Activated CD4-positive, alpha-beta memory T cell treated with anti-CD3 and anti-CD28 coated beads for 36 hours (primary cell): ENCODE measurements at regions of chr2 and their contacts with region 1.

Region 1: GRCh38 chr2:70142590-70143313 is 48.1 kb downstream of the C2orf42 start:
- DNase-seq: peak; percentile 100
- H3K4me3 Mint-ChIP-seq: peak overlapping the region; percentile 89
- H3K27ac Mint-ChIP-seq: peak overlapping the region; percentile 96
- H3K4me1 Mint-ChIP-seq: peaks cover 62% of the 10 kb centered on the region
- H3K27me3 Mint-ChIP-seq: no peaks in the 10 kb centered on the region

Region 2: GRCh38 chr2:69829256-69830046 is 313.3 kb before region 1 on chr2 and contains the start of gene GMCL1:
- CTCF ChIA-PET with region 1: no interaction called
- POLR2A ChIA-PET with region 1: interaction called, 3 read pairs
- intact Hi-C with region 1: loop called (anchors 2 kb)
- DNase-seq: peak; percentile 99
- H3K4me3 Mint-ChIP-seq: peak within 1 kb of the TSS; percentile 81
- H3K27ac Mint-ChIP-seq: peak within 1 kb of the TSS; percentile 92
- H3K4me1 Mint-ChIP-seq: peaks cover 40% of the 10 kb centered on the region
- H3K27me3 Mint-ChIP-seq: no peaks in the 10 kb centered on the region
- total RNA-seq, gene GMCL1: 20.6 to 22.1 TPM

Region 3: GRCh38 chr2:70086838-70087701 is 55.7 kb before region 1 on chr2 and contains the start of gene PCBP1:
- CTCF ChIA-PET with region 1: interaction called, 39 read pairs
- POLR2A ChIA-PET with region 1: interaction called, 86 read pairs
- intact Hi-C with region 1: loop called (anchors 1 kb)
- DNase-seq: peak; percentile 96
- H3K4me3 Mint-ChIP-seq: peak within 1 kb of the TSS; percentile 97
- H3K27ac Mint-ChIP-seq: peak within 1 kb of the TSS; percentile 100
- H3K4me1 Mint-ChIP-seq: peaks cover 49% of the 10 kb centered on the region
- H3K27me3 Mint-ChIP-seq: peaks cover 3% of the 10 kb centered on the region
- total RNA-seq, gene PCBP1: 444 to 449 TPM

Region 4: GRCh38 chr2:70124983-70125480 is 17.7 kb before region 1 on chr2:
- CTCF ChIA-PET with region 1: interaction called, 9 read pairs
- POLR2A ChIA-PET with region 1: interaction called, 108 read pairs
- intact Hi-C with region 1: loop called (anchors 1 kb)
- DNase-seq: peak; percentile 67
- H3K4me3 Mint-ChIP-seq: peak overlapping the region; percentile 92
- H3K27ac Mint-ChIP-seq: peak overlapping the region; percentile 98
- H3K4me1 Mint-ChIP-seq: peaks cover 62% of the 10 kb centered on the region
- H3K27me3 Mint-ChIP-seq: no peaks in the 10 kb centered on the region

Region 5: GRCh38 chr2:70190418-70191243 is 47.9 kb after region 1 on chr2 and contains the start of gene C2orf42:
- CTCF ChIA-PET with region 1: interaction called, 9 read pairs
- POLR2A ChIA-PET with region 1: interaction called, 14 read pairs
- intact Hi-C with region 1: loop called (anchors 1 kb)
- DNase-seq: peak; percentile 98
- H3K4me3 Mint-ChIP-seq: peak within 1 kb of the TSS; percentile 97
- H3K27ac Mint-ChIP-seq: peak within 1 kb of the TSS; percentile 99
- H3K4me1 Mint-ChIP-seq: peaks cover 20% of the 10 kb centered on the region
- H3K27me3 Mint-ChIP-seq: peaks cover 1% of the 10 kb centered on the region
- total RNA-seq, gene C2orf42: 23.5 to 23.9 TPM

Region 6: GRCh38 chr2:70440621-70441020 is 297.9 kb after region 1 on chr2:
- CTCF ChIA-PET with region 1: no interaction called
- POLR2A ChIA-PET with region 1: no interaction called
- intact Hi-C with region 1: no loop called
- DNase-seq: peak; percentile 37
- H3K4me3 Mint-ChIP-seq: no peak overlapping the region
- H3K27ac Mint-ChIP-seq: peak overlapping the region; percentile 49
- H3K4me1 Mint-ChIP-seq: peaks cover 20% of the 10 kb centered on the region
- H3K27me3 Mint-ChIP-seq: no peaks in the 10 kb centered on the region